Posterior cingulate gyrus (tissue), 11 donors: ENCODE measurements at regions of chr4 and their contacts with region 1.

Region 1: DNA sequence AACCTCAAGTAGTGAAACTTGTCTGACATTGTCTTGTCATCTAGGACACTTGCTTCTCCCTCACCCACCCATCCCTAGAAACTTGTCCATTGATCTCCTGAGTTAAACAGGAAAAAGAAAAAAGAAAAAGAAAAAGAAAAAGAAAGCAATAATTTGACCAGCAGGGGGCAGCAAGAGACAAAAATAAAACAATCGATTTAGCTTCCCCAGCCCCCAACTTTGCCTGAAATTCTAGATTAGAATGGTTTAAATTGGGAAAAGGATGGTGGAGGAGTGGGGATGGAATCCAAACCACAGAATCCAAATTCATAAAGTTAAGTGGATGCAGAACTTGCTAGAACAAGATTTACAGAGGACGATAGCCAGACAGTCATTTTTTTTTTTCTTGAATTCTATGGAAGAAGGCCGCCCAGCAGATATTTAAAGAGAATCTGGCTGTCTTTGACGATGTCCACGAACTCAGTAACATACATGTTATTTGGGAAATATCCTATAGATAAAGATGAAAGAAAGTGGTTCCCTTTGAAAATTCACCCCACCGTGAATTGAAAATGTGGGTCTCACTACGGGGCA is 282.9 kb downstream of the USP46 start:
- DNase-seq: no peak

Region 2: DNA sequence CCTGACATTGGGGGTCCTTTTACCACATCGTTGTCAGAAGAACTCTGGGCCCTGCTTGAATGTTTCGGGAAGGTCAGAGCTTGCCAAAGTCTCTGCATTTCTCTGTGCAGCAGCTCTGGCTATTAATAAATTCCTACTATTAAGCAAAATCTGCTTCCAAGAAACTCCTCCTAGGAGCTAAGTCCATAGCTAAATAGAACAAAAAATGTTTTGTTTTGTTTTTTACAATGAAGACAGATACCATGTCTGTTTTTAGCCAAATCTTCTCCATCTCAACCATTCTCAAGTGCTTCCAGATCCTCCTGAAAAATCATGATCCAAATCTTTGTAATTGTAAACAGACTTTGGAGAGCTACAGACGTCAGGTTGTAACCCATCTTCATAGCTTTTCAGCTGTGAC is 163.5 kb before region 1 on chr4:
- intact Hi-C with region 1: no loop called
- DNase-seq: no peak

Region 3: GRCh38 chr4:52234561-52235440 is 141.4 kb before region 1 on chr4:
- intact Hi-C with region 1: loop called (anchors 10 kb)
- DNase-seq: no peak

Region 4: DNA sequence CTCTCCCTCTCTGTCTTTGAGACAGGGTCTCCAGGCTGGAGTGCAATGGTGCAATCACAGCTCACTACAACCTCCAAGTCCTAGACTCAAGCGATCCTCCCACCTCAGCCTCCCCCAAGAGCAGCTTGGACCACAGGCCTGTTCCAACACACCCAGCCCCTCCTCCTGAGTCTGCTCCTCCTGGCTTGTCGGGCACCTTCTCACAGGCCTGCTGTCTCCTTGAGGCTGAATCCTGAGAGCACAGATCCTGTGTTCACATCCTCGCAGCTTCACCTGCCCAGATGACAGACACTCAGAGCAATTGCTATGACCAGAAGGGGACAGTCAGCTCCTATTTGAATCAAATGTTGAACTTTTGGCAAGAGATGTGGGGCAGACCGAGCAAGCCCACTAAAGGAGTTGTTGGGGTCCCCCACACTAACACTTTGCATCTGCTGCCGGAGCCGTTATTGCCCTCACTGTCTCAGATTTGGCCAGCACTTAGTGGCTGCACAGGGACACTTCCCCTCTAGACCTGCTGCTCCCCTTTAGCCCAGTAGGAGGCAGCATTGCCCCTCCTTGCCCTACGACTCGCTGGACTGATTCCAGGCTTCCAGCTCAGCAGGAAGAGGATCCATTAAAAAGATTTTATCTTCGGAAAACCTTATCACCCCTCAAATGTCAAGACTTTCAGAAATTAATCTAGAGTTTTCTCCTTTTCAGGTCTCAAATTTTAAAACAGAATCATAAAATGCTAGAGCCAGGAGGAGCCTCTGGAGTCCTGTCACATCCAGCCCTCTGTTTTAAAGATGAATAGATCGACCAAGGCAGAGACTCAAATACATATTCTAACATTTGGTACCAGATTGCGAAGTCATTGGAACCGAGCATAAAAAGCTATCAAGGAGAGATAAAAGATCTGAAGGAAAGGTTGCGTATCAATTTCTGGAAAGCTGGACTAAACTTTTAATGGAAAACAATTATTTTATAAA is 169.2 kb after region 1 on chr4:
- intact Hi-C with region 1: loop called (anchors 2 kb)
- DNase-seq: peak in 6 of 10 donors; percentile 53 to 92 (median 74)